Activated CD4-positive, alpha-beta memory T cell treated with anti-CD3 and anti-CD28 coated beads, Interleukin-2, amount 10 ng/mL, durations not matched to agents 7 days and 5 days (primary cell): ENCODE measurements at regions of chr17 and their contacts with region 1.

Region 1: GRCh38 chr17:45148183-45149036 is at the start of gene HEXIM1:
- DNase-seq: peak; percentile 99
- H3K4me3 Mint-ChIP-seq: peak within 1 kb of the TSS; percentile 97
- H3K27ac Mint-ChIP-seq: peak within 1 kb of the TSS; percentile 98
- H3K4me1 Mint-ChIP-seq: peaks cover 45% of the 10 kb centered on the region
- H3K27me3 Mint-ChIP-seq: no peaks in the 10 kb centered on the region
- total RNA-seq, gene HEXIM1: 35.0 to 35.8 TPM

Region 2: DNA sequence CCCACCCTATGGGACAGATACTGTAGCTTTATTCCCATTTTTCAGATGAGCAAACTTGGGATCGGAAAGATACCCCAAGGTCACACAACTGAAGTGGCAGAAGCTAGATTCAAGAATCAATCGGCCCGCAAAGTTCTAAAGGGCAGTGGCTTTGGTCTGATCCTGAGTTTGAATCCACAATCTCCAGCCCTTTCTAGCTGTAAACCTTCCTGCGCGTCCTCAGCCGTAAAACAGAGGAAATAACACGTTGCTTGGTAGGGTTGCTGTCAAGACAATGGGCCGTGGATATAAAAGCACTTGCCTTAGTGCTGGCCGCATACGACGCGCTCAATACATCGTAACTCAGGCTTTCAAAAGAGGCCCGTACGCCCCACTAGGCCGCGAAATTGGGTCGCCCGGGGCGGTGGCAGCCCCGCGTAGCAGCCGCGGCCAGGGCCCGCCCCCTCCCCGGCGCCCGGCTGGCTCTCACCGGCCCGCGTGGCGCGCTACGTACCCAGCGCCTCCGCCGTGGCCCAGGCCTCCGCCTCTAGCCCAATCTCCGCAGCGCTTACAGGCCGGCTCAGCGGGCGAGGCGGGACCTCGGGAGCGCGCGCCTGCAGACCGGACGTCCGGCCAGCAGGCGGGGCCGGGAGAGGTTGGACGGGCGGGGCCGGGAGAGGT is 97.2 kb before region 1 on chr17 and contains the start of gene DCAKD:
- CTCF ChIA-PET with region 1: interaction called, 4 read pairs
- POLR2A ChIA-PET with region 1: interaction called, 25 read pairs
- DNase-seq: peak; percentile 95
- H3K4me3 Mint-ChIP-seq: peak within 1 kb of the TSS; percentile 96
- H3K27ac Mint-ChIP-seq: peak within 1 kb of the TSS; percentile 98
- H3K4me1 Mint-ChIP-seq: peaks cover 49% of the 10 kb centered on the region
- H3K27me3 Mint-ChIP-seq: no peaks in the 10 kb centered on the region
- total RNA-seq, gene DCAKD: 25.9 to 26.2 TPM

Region 3: DNA sequence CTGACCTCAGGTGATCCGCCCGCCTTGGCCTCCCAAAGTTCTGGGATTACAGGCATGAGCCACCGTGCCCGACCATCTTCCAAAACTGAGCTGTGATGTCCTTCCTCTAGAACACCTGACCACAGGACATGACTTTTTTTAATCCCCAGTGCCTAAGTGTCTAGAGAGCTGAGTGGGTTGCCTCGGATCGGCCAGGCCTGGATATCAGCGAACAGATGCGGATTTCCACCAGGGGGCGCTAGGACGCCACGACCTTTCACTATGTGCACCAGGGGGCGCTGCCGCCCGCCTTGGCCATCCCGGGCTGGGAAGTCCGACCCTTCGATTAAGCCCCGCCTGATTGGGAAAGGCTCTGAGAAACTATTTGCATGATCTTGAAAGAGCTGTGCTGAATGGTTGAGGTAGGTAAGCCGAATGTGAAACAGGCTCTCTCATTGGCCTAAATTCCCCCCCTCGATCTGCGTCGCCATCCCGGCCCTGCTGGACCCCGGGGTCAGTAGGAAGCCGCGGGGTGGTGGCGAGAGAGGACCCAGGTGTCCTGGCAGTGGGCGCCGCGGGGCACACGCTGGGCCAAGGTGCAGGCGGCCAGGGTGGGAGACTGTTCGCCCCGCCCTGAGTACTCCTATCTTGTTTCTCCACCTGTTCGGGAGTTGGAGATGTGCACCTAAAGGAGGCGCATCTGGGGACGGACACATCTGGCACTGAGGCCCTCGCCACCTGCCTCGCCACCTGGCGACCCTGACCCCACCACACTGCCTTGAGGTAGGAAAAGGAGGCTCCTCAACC is 13.0 kb before region 1 on chr17 and contains the start of gene ACBD4:
- CTCF ChIA-PET with region 1: interaction called, 347 read pairs
- POLR2A ChIA-PET with region 1: interaction called, 106 read pairs
- DNase-seq: peak; percentile 98
- H3K4me3 Mint-ChIP-seq: peak within 1 kb of the TSS; percentile 87
- H3K27ac Mint-ChIP-seq: peak within 1 kb of the TSS; percentile 66
- H3K4me1 Mint-ChIP-seq: peaks cover 20% of the 10 kb centered on the region
- H3K27me3 Mint-ChIP-seq: peaks cover 9% of the 10 kb centered on the region
- total RNA-seq, gene ACBD4: 15.0 to 17.8 TPM

Region 4: DNA sequence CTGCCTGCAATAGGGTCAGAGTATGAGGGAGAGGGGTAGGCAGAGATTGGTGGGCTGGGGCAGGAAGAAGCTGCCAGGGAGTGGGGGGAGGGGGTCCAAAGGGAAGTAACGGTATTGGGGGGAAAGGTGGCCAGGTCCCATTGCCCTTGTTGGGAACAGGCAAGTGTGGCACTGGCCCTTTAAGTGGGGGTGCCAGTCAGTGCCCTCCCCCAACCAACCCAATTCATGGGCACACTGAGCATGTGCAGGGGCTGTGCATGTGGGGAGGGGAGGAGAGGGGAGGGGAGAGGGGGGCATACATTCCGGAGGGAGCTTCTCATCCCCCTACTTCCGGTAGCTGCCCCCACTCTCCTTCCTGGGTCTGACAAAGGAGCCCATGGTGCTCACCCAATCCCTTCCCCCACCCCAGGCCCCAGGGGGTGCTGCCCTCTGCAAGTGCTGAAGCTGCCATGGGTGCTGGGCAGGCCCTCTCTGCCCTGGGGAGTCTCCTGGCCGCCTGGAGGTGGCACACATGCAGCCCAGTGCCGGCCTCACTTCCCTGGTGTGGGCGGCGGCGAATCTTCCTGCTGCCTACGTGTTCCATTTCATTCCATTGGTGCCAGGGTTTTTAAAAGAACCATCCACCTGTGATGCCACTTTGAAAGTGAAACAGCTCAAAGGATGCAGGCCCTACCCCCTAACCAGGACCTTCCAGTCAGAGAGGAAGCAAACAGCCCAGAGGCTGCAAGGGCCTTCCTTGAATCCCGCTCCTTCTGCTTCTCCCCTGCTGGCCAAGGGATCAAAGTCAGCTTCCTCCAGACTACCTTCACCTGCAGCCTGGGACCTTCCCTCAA is 24.3 kb after region 1 on chr17:
- CTCF ChIA-PET with region 1: interaction called, 18 read pairs
- POLR2A ChIA-PET with region 1: interaction called, 42 read pairs
- DNase-seq: peak; percentile 40
- H3K4me3 Mint-ChIP-seq: peak overlapping the region; percentile 51
- H3K27ac Mint-ChIP-seq: peak overlapping the region; percentile 81
- H3K4me1 Mint-ChIP-seq: peaks cover 25% of the 10 kb centered on the region
- H3K27me3 Mint-ChIP-seq: no peaks in the 10 kb centered on the region

Region 5: DNA sequence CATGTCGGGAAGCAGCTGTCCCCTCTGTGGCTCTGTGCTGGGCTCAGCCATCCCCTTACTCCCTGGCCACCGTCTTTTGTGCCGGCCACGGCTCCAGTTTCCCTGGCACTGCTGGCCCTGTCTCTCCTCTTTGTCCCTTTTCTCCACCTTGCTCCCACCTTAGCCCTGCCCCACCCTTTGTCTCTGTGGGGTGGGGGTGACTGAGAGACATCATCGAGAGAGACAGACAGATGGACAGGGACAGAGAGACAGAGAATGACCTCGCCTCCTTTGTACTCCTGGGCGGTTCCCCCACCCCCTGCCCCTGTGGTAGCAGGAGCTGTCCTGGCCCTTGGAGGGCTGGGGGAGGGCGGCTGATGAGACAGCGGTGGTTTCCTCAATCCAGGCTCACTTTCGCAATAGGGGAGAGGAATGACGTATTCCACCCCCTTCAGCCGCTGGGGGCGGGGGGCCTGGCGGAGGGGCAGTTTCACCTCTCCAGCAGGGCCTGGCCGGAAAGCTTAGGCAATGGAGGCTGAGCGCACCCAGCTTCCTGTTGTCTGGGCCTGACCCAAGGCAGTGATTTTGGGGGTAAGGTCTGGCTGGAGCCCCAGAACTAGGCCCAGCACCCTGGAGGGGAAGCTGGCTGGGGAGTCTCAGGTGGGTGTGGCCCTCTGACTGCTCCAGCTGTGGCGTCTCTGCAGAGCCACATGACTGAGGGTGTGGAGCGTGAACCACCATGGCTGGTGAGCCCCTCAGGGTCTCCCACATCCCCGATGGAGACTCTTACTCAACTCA is 80.5 kb after region 1 on chr17:
- CTCF ChIA-PET with region 1: interaction called, 8 read pairs
- POLR2A ChIA-PET with region 1: interaction called, 96 read pairs
- DNase-seq: peak; percentile 85
- H3K4me3 Mint-ChIP-seq: peak overlapping the region; percentile 100
- H3K27ac Mint-ChIP-seq: peak overlapping the region; percentile 99
- H3K4me1 Mint-ChIP-seq: peaks cover 88% of the 10 kb centered on the region
- H3K27me3 Mint-ChIP-seq: no peaks in the 10 kb centered on the region

Region 6: GRCh38 chr17:45307290-45308015 is 159.0 kb after region 1 on chr17:
- CTCF ChIA-PET with region 1: interaction called, 6 read pairs
- POLR2A ChIA-PET with region 1: interaction called, 20 read pairs
- DNase-seq: peak; percentile 51
- H3K4me3 Mint-ChIP-seq: no peak overlapping the region
- H3K27ac Mint-ChIP-seq: peak overlapping the region; percentile 75
- H3K4me1 Mint-ChIP-seq: peaks cover 86% of the 10 kb centered on the region
- H3K27me3 Mint-ChIP-seq: no peaks in the 10 kb centered on the region